ENCODE measurements at regions of chr3 and their contacts with region 1.

Region 1: DNA sequence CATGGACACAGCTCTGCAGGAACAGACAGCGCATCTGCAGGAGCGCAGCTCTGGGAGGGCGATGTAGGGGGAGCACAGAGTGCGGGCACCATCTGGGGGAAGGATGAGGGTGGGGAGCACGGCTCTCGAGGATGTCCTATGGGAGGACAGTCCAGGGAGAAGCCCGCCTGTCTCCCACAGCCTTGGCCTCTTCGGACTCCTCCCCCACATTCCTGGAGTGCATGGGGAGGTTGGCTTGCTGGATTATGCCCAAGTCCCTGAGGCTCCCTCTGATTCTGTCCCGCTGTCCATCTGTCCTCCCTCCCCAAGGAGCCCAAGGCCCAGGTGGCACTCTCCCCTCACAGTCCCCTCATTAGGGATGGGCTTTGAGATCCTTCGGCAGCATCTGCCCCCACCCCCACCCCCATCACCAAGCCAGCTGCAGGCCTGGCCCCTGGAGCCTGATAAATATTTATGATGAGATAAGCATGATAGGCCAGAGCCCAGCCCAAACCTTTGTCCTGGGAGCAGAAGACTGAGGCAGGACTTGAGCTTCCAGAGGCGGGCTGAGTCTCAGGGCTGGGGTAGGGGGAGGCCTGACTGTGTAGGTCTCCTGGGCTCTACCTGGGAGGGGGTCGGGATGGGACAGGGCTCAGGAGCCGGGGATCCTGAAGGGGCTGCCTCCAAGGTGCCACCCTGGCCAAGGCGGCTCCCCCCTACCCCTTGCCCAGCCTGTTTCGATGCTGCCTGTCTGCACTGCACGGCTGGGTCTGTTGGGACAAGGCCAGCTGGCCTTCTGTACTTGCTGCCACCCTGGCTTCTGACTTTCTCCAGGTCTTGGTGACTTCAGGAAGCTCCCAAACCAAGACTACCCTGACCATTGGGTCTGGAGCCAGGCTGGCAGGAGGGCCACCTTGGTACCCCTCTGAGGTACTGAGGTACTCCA is 28.6 kb upstream of the SEMA3F start:
- DNase-seq: peak; percentile 58
- H3K4me3 ChIP-seq: no peak overlapping the region
- H3K27ac ChIP-seq: peak overlapping the region in 1 of 2 experiments; percentile 74; a peak in 1 of 4 replicates
- H3K4me1 ChIP-seq: peaks cover 13 to 58% of the 10 kb centered on the region in 2 experiments
- H3K27me3 ChIP-seq: no peaks in the 10 kb centered on the region
- CTCF ChIP-seq: no peak
- EP300 ChIP-seq: no peak
- RAD21 ChIP-seq: no peak

Region 2: GRCh38 chr3:50138266-50139200 is 12.0 kb after region 1 on chr3:
- CTCF ChIA-PET with region 1: interaction called, 22 read pairs
- POLR2A ChIA-PET with region 1: interaction called, 19 read pairs
- DNase-seq: peak; percentile 51
- H3K4me3 ChIP-seq: no peak overlapping the region; a peak in 1 of 4 replicates
- H3K27ac ChIP-seq: no peak overlapping the region
- H3K4me1 ChIP-seq: peaks cover 14 to 43% of the 10 kb centered on the region in 2 experiments; a peak in 3 of 4 replicates
- H3K27me3 ChIP-seq: no peaks in the 10 kb centered on the region
- CTCF ChIP-seq: no peak
- EP300 ChIP-seq: no peak
- RAD21 ChIP-seq: no peak